Pancreas (tissue), 10 donors: ENCODE measurements at regions of chr3 and their contacts with region 1.

Region 1: DNA sequence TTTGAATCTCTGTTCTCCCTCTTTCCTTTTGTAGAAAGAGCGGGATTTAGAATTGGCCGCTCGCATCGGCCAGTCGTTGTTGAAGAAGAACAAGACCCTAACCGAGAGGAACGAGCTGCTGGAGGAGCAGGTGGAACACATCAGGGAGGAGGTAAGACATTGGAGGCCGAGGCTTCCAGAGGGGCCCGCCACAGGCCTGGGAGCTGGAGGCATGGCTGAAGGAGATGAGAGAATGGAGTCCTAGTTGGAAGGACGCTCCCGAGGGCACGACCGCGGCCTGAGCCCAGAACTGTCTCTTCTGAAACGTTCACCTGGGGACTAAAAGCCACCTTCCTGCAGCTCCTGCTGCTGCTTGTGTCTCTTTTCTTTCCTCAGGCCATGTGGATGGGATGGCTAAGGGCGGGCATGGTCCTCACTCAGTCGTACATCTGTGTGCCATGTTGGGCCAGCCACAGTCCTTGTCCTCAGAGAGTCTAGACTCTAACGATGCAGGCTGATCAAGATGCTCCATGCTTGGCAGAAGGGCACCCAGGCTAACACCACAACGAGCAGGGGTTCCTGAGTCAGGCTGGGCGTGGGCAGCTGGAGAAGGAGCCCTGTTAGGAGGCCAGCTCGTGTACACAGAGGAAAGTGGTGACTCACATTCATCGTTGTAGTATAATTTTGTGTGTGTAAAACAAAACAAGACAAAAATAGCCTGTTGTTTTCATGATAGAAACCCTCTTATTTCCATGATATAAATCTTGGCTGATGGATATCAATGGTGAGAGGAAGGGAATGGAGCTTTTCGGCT is 81.1 kb downstream of the CCK start:
- DNase-seq: no peak
- ATAC-seq: peak in 1 of 4 donors; percentile 58
- H3K4me3 ChIP-seq: no peak overlapping the region
- H3K27ac ChIP-seq: peak overlapping the region in 2 of 4 donors; percentile 8 to 13
- H3K4me1 ChIP-seq: peaks cover 0 to 6% (median 4%) of the 10 kb centered on the region in 3 donors
- H3K27me3 ChIP-seq: no peaks in the 10 kb centered on the region
- CTCF ChIP-seq: no peak

Region 2: GRCh38 chr3:41900265-41900664 is 284.6 kb before region 1 on chr3:
- intact Hi-C with region 1: loop called in 2 of 3 experiments (anchors 10 kb)
- DNase-seq: no peak
- ATAC-seq: no peak
- H3K4me3 ChIP-seq: no peak overlapping the region
- H3K27ac ChIP-seq: no peak overlapping the region
- H3K4me1 ChIP-seq: no peaks in the 10 kb centered on the region
- H3K27me3 ChIP-seq: no peaks in the 10 kb centered on the region
- CTCF ChIP-seq: no peak